MCF 10A (cell line): ENCODE measurements at regions of chr6 and their contacts with region 1.

Region 1: DNA sequence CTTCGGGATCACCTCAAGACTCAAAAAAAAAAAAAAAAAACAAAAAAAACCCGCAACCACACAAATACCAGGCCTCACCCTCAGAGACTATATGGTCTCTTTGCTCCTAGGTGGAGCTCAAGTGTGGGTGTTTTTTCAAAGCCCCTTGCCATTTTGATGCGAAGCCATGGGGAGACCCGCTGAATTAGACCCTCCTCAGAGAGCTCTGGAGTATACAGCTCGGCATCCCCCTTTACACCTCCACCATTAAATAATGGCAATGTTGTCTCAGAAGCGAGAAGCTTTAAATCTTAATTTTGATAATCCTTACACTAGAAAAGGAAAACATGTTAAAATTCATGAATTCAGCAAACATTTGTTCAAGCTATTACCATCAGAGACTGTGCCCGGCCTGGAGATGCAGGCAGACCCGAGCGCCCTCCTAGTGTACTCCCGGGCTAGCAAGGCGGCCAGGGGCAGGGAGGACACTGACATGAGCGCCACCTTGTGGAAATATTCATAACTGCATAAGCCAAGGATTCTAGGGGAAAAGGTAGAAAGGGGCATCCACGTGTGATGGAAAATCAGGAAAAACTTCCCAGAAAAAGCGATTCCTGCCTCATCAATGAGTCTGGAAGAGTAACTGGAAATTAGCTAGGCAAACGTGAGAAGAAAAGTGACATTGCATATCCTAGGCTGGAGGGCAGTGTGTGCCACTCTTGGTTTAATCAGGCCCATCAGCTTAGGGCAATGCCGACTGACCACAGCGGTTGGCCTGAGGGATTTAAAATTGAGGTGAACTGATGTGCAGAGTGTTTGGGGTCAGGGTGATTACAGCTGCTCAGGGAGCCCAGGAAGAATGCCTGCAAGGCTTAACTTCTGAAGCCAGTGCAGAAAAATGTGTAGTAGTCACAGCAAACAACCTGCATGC is 72.5 kb downstream of the B3GAT2 start:
- DNase-seq: peak; percentile 68
- H3K4me3 Mint-ChIP-seq: no peak overlapping the region
- H3K27ac Mint-ChIP-seq: no peak overlapping the region
- H3K4me1 Mint-ChIP-seq: no peaks in the 10 kb centered on the region
- H3K27me3 Mint-ChIP-seq: peaks cover 57% of the 10 kb centered on the region
- CTCF ChIP-seq: peak; percentile 87

Region 2: DNA sequence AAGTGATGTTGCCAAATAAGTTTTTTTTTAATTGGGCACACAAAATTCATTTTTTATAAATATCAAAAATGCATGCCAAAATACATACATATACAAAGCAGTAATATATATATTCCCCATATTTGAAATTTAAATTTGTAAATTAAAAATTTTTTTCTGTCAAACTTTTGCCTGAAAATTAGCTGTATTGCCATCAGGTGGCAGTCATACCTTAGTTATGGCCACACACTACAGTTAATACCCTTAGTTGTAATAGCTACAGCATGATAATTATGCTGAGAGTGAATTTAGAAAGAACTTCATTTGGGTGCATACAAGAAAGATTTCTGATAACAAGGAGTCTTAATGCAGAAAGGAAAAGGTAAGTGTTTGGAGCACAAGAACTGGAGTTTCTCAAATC is 363.8 kb before region 1 on chr6:
- CTCF ChIA-PET with region 1: interaction called, 24 read pairs
- POLR2A ChIA-PET with region 1: no interaction called
- intact Hi-C with region 1: loop called (anchors 1 kb)
- DNase-seq: peak; percentile 13
- H3K4me3 Mint-ChIP-seq: no peak overlapping the region
- H3K27ac Mint-ChIP-seq: no peak overlapping the region
- H3K4me1 Mint-ChIP-seq: no peaks in the 10 kb centered on the region
- H3K27me3 Mint-ChIP-seq: no peaks in the 10 kb centered on the region
- CTCF ChIP-seq: peak; percentile 46

Region 3: DNA sequence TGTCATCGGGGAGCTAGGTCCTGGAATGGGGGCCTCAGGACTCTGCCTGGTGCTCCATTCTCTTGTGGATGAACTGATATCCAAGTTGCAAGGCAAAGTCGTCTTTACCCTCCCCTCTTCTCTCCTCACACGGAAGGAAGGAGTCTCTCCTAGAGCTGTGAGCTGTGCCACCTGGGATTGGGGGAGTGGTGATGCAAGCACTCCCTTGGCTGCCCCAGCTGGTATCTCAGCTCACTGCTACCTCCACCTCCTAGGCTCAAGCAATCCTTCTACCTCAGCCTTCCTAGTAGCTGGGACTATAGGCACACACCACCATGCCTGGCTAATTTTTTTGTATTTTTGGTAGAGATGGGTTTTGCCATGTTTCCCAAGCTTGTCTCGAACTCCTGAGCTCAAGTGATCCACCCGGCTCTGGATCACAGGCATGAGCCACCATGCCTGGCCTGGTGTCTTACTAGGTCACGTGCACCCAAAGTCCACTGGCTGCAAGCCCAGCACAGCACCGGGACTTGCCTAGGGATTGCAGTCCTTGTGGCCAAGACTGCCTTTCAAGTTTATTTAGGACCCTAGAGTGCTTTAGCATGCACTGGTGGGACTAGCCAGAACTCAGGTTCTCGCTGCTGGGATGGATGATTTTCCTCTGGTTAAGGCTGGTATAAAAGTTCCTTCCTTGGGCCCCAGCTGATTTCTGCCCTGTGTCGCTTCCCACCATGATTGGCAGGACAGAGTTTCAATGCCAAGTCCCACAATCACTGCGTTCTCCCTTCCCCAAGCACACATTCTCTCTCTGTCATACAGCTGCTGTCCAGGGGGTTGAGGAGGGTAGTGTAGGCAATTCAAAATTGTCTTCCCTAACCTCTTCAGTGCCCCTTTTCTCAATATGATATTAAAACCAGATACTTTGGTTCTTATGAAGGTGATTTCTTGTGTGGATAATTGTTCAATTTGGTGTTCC is 183.1 kb before region 1 on chr6:
- CTCF ChIA-PET with region 1: interaction called, 52 read pairs
- POLR2A ChIA-PET with region 1: no interaction called
- intact Hi-C with region 1: loop called (anchors 1 kb)
- DNase-seq: no peak
- H3K4me3 Mint-ChIP-seq: no peak overlapping the region
- H3K27ac Mint-ChIP-seq: no peak overlapping the region
- H3K4me1 Mint-ChIP-seq: no peaks in the 10 kb centered on the region
- H3K27me3 Mint-ChIP-seq: no peaks in the 10 kb centered on the region
- CTCF ChIP-seq: no peak

Region 4: GRCh38 chr6:70717038-70717801 is 167.1 kb before region 1 on chr6:
- CTCF ChIA-PET with region 1: interaction called, 178 read pairs
- POLR2A ChIA-PET with region 1: no interaction called
- intact Hi-C with region 1: no loop called
- DNase-seq: no peak
- H3K4me3 Mint-ChIP-seq: no peak overlapping the region
- H3K27ac Mint-ChIP-seq: no peak overlapping the region
- H3K4me1 Mint-ChIP-seq: no peaks in the 10 kb centered on the region
- H3K27me3 Mint-ChIP-seq: no peaks in the 10 kb centered on the region
- CTCF ChIP-seq: no peak

Region 5: DNA sequence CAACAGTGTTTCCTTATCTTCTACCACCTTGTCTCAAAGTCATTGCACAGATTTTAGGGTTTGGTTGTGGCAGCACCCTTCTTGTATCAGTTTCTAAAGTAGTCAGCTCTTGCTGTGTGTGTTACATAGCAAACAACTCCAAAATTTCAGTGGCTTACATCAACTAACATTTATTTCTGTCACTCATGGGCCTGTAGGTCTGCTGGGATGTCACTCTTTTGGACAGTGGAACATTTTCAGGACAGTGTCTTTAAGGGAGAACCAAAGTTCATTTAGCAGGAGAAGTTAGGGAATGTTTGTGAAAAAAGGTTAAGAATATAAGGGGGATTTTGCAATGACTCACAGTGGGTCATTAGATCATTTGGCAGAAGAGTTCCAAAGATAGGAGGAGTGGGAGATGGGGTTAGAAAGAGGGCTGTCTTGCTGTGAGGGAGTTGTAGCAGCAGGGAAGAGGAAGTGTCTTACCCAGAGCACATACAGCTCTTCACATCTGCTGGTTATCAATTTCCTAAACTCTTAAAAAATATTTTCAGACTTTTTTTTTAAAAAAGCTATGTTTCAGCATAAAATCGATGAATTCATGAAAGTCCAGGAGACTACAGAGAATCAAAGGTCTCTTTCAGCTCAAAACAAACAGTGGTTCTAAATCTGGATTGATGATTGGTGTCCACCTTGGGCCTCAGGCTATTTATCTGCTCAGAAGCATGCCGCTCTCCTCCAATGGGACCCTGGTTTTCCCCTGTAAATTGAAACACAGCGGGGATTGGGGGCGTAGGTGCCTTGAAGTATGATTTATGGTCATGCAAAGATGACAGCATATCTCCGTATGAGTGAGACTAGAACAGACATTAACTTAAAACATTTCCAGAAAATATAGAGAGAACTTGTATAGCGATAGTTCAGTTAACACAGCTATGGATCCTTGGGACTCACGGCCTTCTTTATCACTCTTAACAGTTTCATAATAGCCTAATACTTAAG is 44.8 kb before region 1 on chr6:
- CTCF ChIA-PET with region 1: interaction called, 18 read pairs
- POLR2A ChIA-PET with region 1: no interaction called
- intact Hi-C with region 1: no loop called
- DNase-seq: no peak
- H3K4me3 Mint-ChIP-seq: no peak overlapping the region
- H3K27ac Mint-ChIP-seq: no peak overlapping the region
- H3K4me1 Mint-ChIP-seq: peaks cover 3% of the 10 kb centered on the region
- H3K27me3 Mint-ChIP-seq: no peaks in the 10 kb centered on the region
- CTCF ChIP-seq: no peak

Region 6: GRCh38 chr6:70863343-70863742 is 21.0 kb before region 1 on chr6:
- CTCF ChIA-PET with region 1: interaction called, 21 read pairs
- POLR2A ChIA-PET with region 1: interaction called, 4 read pairs
- intact Hi-C with region 1: no loop called
- DNase-seq: no peak
- H3K4me3 Mint-ChIP-seq: no peak overlapping the region
- H3K27ac Mint-ChIP-seq: no peak overlapping the region
- H3K4me1 Mint-ChIP-seq: no peaks in the 10 kb centered on the region
- H3K27me3 Mint-ChIP-seq: peaks cover 17% of the 10 kb centered on the region
- CTCF ChIP-seq: no peak

Region 7: GRCh38 chr6:70998148-70998547 is 113.8 kb after region 1 on chr6:
- CTCF ChIA-PET with region 1: no interaction called
- POLR2A ChIA-PET with region 1: no interaction called
- intact Hi-C with region 1: no loop called
- DNase-seq: no peak
- H3K4me3 Mint-ChIP-seq: no peak overlapping the region
- H3K27ac Mint-ChIP-seq: no peak overlapping the region
- H3K4me1 Mint-ChIP-seq: no peaks in the 10 kb centered on the region
- H3K27me3 Mint-ChIP-seq: peaks cover 26% of the 10 kb centered on the region
- CTCF ChIP-seq: no peak

Region 8: DNA sequence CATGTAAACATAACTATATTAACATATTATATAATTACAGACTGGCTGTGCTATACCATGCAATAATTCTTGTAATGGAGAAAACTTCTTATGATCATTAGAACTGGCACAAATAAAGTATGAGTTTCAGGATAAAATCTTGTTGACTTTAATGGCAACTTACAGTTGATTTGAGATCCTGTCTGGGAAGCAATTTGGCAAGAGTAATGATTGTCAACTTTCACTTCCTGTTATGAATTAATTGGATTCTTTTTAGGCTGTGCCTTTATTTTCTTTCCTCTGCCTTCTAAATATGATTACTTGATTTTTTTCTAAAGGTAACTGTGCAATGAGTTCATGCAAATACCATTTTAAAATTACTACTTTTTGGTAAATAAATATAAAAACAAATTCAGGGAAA is 230.7 kb after region 1 on chr6:
- CTCF ChIA-PET with region 1: no interaction called
- POLR2A ChIA-PET with region 1: no interaction called
- intact Hi-C with region 1: no loop called
- DNase-seq: no peak
- H3K4me3 Mint-ChIP-seq: no peak overlapping the region
- H3K27ac Mint-ChIP-seq: no peak overlapping the region
- H3K4me1 Mint-ChIP-seq: no peaks in the 10 kb centered on the region
- H3K27me3 Mint-ChIP-seq: peaks cover 66% of the 10 kb centered on the region
- CTCF ChIP-seq: no peak